CD4-positive, alpha-beta memory T cell (primary cell): ENCODE measurements at regions of chr9 and their contacts with region 1.

Region 1: DNA sequence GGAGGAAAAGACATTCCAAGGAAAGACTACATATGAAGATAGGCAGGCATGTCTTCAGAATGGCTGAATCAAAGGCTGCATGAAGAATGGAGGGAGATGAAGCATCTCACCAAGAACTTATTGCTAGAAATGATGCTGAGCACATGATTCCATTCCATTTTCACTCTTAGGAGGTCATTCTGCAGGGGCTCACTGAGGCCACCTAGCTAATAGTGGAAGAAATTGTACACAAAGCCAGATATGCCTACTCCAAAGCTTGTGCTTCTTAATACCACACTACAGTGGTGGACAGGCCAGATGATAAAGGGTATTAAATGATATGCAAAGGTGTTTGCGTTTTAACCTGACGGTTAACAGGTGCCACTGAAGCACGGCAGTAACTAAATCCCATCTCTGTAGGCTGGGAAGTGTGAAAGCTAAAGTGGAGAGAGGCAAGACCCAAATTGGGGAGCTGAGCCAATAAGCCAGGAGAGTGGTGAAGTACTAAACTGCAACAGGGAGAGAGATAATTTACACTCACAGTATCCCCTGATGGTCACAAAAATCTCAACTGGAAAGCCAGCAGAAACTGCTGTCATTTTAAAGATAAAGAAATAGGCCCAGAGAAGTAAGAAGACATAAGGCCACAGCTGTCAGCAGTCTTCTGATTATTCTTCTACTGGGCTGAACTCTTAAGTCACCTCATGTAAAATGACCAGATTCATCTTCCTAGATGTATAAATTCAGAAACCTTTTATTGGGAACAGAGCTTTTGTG is 14.6 kb downstream of the NDUFA8 start:
- DNase-seq: no peak
- H3K4me3 ChIP-seq: no peak overlapping the region
- H3K4me3 Mint-ChIP-seq: no peak overlapping the region
- H3K27ac ChIP-seq: no peak overlapping the region
- H3K27ac Mint-ChIP-seq: no peak overlapping the region
- H3K4me1 ChIP-seq: no peaks in the 10 kb centered on the region
- H3K4me1 Mint-ChIP-seq: peaks cover 0 to 5% (median 3%) of the 10 kb centered on the region in 4 donors
- H3K27me3 ChIP-seq: no peaks in the 10 kb centered on the region
- H3K27me3 Mint-ChIP-seq: no peaks in the 10 kb centered on the region

Region 2: GRCh38 chr9:122125158-122125508 is 19.9 kb before region 1 on chr9:
- CTCF ChIA-PET with region 1: interaction called, 47 read pairs
- POLR2A ChIA-PET with region 1: no interaction called
- intact Hi-C with region 1: no loop called
- DNase-seq: peak; percentile 65 to 75 (median 68)
- H3K4me3 ChIP-seq: no peak overlapping the region
- H3K4me3 Mint-ChIP-seq: peak overlapping the region in 6 of 8 donors; percentile 42 to 71 (median 60)
- H3K27ac ChIP-seq: no peak overlapping the region
- H3K27ac Mint-ChIP-seq: peak overlapping the region in 1 of 7 donors; percentile 26
- H3K4me1 ChIP-seq: peaks cover 7% of the 10 kb centered on the region
- H3K4me1 Mint-ChIP-seq: peaks cover 11 to 25% (median 18%) of the 10 kb centered on the region in 4 donors
- H3K27me3 ChIP-seq: peaks cover 11% of the 10 kb centered on the region
- H3K27me3 Mint-ChIP-seq: peaks cover 21 to 28% of the 10 kb centered on the region in 2 donors